Ovary (tissue), 10 donors: ENCODE measurements at regions of chr4 and their contacts with region 1.

Region 1: GRCh38 chr4:77385124-77385969 is 220.3 kb upstream of the CXCL13 start:
- DNase-seq: peak; percentile 27 to 64 (median 40)
- H3K4me3 ChIP-seq: no peak overlapping the region
- H3K27ac ChIP-seq: no peak overlapping the region
- H3K4me1 ChIP-seq: no peaks in the 10 kb centered on the region
- H3K27me3 ChIP-seq: no peaks in the 10 kb centered on the region
- CTCF ChIP-seq: peak in 2 of 3 donors; percentile 37 to 77
- EP300 ChIP-seq: no peak
- POLR2A ChIP-seq: no peak

Region 2: DNA sequence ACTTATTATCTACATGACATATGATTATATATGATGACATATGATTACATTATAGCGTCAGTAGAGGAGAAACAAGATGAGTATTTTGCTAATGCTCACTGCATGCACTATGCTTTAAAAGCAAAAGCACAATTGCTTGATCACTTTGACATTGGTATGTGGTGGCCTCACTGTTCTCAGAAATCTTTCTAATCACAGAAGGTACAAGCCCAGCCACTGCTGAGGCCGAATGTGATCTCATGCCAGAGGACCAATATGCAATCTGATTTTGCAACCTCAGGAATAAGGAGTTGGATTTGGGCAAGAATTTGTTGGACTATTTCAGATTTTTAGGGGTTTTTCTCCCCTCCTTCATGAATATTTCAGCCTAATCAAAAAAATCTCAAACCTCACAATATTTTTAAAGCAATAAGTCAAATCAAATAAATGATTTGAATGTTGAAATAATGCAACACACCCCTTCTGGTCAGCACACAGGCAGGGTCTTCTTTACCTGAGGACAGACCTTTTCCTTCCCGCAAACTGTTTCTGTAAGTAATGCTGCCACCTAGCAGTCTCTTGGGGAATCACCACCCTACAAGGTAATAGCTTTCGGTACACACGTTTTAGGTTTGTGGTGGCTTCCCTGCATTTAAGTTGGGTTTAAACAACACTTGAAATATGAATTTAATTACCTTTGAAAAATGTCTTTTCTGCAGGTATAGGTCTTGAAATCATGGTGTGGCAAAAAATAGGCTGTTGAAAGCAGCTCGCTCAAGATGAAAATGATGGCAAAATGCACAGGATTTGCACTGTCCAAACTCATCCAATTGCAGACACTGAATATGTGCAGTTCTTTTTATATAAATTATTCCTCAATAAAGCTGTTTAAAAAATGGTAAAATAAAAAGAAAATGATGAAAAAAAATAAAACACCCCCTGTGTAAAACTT is 215.4 kb after region 1 on chr4:
- intact Hi-C with region 1: loop called (anchors 5 to 10 kb)
- DNase-seq: no peak
- H3K4me3 ChIP-seq: no peak overlapping the region
- H3K27ac ChIP-seq: no peak overlapping the region
- H3K4me1 ChIP-seq: no peaks in the 10 kb centered on the region
- H3K27me3 ChIP-seq: no peaks in the 10 kb centered on the region
- CTCF ChIP-seq: peak in 2 of 3 donors; percentile 19 to 50
- EP300 ChIP-seq: no peak
- POLR2A ChIP-seq: no peak